ENCODE measurements at regions of chr22 and their contacts with region 1.

Region 1: DNA sequence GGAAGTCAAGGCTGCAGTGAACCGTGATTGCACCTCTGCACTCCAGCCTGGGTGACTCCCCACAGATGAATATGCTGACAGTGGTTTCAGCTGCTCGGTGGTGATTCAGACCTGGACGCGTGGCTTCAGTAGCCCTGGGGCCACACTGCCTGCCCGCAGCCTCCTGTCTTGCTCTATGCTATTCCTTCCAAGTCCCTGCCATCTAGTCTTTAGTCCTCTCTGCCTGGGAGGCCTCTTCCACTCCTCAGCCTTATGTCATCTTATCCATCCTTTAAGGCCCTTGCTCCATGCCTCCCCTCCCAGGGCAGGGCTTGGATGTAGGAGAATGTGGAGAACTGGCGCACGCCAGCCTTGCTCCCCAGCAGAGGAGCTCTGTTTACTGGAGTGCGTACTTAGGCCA is 23.0 kb downstream of the YDJC start:
- DNase-seq: no peak
- ATAC-seq: peak; percentile 20; the same call in 1 of the 2 replicates
- H3K4me3 ChIP-seq: no peak overlapping the region
- H3K27ac ChIP-seq: no peak overlapping the region
- H3K4me1 ChIP-seq: no peaks in the 10 kb centered on the region; the same call in 1 of the 2 replicates
- H3K27me3 ChIP-seq: no peaks in the 10 kb centered on the region
- CTCF ChIP-seq: no peak

Region 2: DNA sequence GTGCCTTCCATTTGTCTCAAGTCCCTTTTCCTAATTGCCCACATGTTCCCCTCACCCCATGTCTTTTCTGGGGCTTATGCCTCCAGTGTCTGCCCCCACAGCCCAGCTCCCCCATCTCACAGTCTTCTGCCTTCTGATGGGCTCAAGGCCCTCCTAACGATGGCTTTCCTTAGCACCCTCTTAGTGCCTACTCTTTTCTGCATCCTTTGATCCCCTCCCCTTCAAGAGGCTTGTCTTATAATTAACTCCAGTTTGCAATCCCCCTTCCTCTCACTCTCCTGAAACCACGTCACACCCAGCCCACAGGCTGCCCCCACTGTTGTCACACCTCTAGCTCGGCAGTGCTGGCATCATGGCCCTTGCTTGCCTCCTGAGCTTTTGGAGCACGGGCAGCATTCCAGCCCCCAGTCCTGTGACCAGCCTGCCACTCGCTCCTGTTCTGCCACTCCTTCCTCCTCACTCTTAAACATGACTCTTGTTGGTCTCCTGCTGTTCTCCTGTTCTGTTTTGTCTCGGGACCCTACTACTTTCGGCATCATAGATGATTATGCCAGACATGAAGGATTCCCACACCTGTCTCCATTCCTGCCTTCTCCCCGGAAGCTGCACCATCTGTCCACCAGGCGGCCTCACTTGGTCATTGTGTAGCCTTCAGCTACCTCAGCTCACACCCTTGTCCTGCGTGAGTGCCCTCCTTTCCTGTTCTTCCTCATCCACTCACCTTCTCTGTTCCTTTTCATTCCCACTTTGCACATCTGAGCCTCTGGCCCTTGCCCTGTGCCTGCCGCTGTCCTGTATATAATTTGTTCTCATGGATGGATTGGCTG is 13.2 kb before region 1 on chr22:
- CTCF ChIA-PET with region 1: interaction called, 12 read pairs
- POLR2A ChIA-PET with region 1: no interaction called
- in situ Hi-C with region 1: no loop called
- intact Hi-C with region 1: no loop called
- DNase-seq: no peak
- ATAC-seq: peak; percentile 79
- H3K4me3 ChIP-seq: no peak overlapping the region
- H3K27ac ChIP-seq: no peak overlapping the region
- H3K4me1 ChIP-seq: peaks cover 8% of the 10 kb centered on the region
- H3K27me3 ChIP-seq: no peaks in the 10 kb centered on the region
- CTCF ChIP-seq: no peak; the same call in 1 of the 2 replicates